K562 (cell line): ENCODE measurements at regions of chr9 and their contacts with region 1.

Region 1: DNA sequence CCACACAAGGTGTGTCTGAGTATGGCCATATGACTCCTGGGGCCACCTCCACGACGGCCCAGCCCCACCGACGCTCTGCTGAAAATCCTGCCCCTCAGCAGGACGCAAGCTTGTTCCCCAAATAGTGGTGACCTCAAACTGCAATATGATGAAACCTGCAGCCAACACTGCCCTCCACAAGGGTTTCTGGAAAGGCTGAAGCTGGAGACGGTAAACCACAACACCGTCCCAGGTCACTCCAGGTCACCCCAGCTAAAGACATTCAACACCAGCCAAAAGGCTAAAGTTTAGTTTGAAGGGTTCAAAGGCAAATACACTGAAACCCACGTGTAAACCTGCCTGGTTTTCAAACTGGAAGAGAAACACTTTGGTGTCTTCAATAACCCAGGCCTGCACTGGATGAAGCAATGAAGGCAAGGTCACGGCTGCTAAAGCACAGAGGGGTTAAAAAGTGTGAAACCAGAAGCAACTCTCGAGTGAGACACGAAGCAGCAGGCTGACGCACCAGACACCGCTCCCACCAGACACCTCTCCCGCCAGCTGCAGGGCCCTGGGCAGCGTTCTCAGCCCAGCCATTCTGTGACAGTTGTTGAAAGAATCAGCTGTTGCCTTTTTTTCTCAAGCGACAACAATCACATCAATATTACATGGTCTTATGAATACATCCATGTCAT is 1.8 kb upstream of the LHX3 start:
- DNase-seq: peak in 2 of 4 experiments; percentile 45 to 60
- ATAC-seq: peak; percentile 87
- H3K4me3 ChIP-seq: no peak overlapping the region
- H3K27ac ChIP-seq: peak overlapping the region; percentile 70; the same call in 2 of the 3 replicates
- H3K4me1 ChIP-seq: peaks cover 21 to 76% of the 10 kb centered on the region in 2 experiments
- H3K27me3 ChIP-seq: peaks cover 3 to 8% of the 10 kb centered on the region in 2 experiments; a peak in 3 of 5 replicates
- CTCF ChIP-seq: no peak
- EP300 ChIP-seq: peak; percentile 96
- POLR2A ChIP-seq: no peak
- RAD21 ChIP-seq: peak; percentile 7 to 36; a peak in 2 of 4 replicates

Region 2: GRCh38 chr9:136133191-136133958 is 73.4 kb before region 1 on chr9:
- CTCF ChIA-PET with region 1: no interaction called
- POLR2A ChIA-PET with region 1: no interaction called
- in situ Hi-C with region 1: no loop called
- intact Hi-C with region 1: no loop called
- DNase-seq: peak; percentile 74 to 95 (median 90)
- ATAC-seq: peak; percentile 96
- H3K4me3 ChIP-seq: peak overlapping the region; percentile 46
- H3K27ac ChIP-seq: no peak overlapping the region
- H3K4me1 ChIP-seq: peaks cover 8 to 58% of the 10 kb centered on the region in 2 experiments
- H3K27me3 ChIP-seq: peaks cover 41 to 79% of the 10 kb centered on the region in 2 experiments
- CTCF ChIP-seq: peak; percentile 46 to 70 (median 61); a peak in 5 of 6 replicates
- EP300 ChIP-seq: no peak
- POLR2A ChIP-seq: no peak
- RAD21 ChIP-seq: peak; percentile 46 to 66

Region 3: DNA sequence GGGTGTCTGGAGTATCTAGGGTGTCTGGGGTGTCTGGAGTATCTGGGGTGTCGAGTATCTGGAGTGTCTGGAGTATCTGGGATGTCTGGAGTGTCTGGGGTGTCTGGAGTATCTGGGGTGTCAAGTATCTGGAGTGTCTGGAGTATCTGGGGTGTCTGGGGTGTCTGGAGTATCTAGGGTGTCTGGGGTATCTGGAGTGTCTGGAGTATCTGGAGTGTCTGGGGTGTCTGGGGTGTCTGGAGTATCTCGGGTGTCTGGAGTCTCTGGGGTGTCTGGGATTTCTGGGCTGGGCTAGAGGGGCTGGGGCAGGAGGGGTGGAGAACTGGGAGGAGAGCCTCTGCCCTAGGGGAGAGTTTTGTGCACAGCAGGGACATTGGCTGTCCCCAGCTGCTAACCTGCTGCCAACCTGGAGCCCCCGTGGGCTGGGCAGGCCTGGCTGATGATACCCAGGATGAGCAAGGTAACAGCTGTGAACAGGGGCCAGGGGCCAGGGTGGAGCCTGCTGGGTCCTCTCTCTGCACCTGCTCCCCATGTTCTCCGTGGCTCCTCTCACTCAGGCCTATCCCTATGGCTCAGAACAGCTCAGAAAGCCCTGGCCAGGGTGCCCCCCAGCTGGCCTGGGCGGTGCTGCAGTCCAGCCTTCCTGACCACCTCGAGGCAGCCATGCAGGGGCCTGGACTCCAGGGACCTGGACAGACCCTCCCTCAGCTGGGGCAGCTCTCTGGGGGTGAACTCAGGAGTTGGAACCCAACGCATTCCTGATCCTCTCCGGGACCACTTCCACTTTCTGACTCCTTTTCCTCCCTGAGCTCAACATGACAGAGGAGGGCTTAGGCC is 31.7 kb before region 1 on chr9:
- CTCF ChIA-PET with region 1: no interaction called
- POLR2A ChIA-PET with region 1: no interaction called
- in situ Hi-C with region 1: no loop called
- intact Hi-C with region 1: no loop called
- DNase-seq: no peak
- ATAC-seq: peak; percentile 52
- H3K4me3 ChIP-seq: no peak overlapping the region
- H3K27ac ChIP-seq: no peak overlapping the region
- H3K4me1 ChIP-seq: peaks cover 0 to 37% of the 10 kb centered on the region in 2 experiments; a peak in 2 of 5 replicates
- H3K27me3 ChIP-seq: peaks cover 25 to 58% of the 10 kb centered on the region in 2 experiments
- CTCF ChIP-seq: peak in 1 of 3 experiments; percentile 23; a peak in 1 of 6 replicates
- EP300 ChIP-seq: no peak
- POLR2A ChIP-seq: no peak
- RAD21 ChIP-seq: no peak

Region 4: GRCh38 chr9:136192289-136193126 is 14.2 kb before region 1 on chr9:
- CTCF ChIA-PET with region 1: no interaction called
- POLR2A ChIA-PET with region 1: interaction called, 5 read pairs
- in situ Hi-C with region 1: no loop called
- intact Hi-C with region 1: loop called (anchors 2 kb)
- DNase-seq: no peak
- ATAC-seq: peak; percentile 35
- H3K4me3 ChIP-seq: peak overlapping the region; percentile 36; the same call in 1 of the 2 replicates
- H3K27ac ChIP-seq: no peak overlapping the region
- H3K4me1 ChIP-seq: peaks cover 28 to 62% of the 10 kb centered on the region in 2 experiments
- H3K27me3 ChIP-seq: peaks cover 0 to 28% of the 10 kb centered on the region in 2 experiments; a peak in 3 of 5 replicates
- CTCF ChIP-seq: no peak
- EP300 ChIP-seq: no peak; the same call in 1 of the 2 replicates
- POLR2A ChIP-seq: no peak
- RAD21 ChIP-seq: no peak